Naive thymus-derived CD8-positive, alpha-beta T cell (primary cell): ENCODE measurements at regions of chr11 and their contacts with region 1.

Region 1: GRCh38 chr11:85752890-85753581 is 57.9 kb downstream of the SYTL2 start:
- DNase-seq: peak; percentile 60 to 99 (median 95)
- ATAC-seq: peak; percentile 87 to 90
- H3K4me3 Mint-ChIP-seq: peak overlapping the region; percentile 69 to 93 (median 84)
- H3K27ac Mint-ChIP-seq: peak overlapping the region; percentile 89 to 99 (median 97)
- H3K4me1 Mint-ChIP-seq: peaks cover 57 to 92% (median 88%) of the 10 kb centered on the region in 4 donors
- H3K27me3 Mint-ChIP-seq: peaks cover 0 to 2% (median 0%) of the 10 kb centered on the region in 5 donors

Region 2: GRCh38 chr11:85779956-85780640 is 27.1 kb after region 1 on chr11:
- POLR2A ChIA-PET with region 1: no interaction called
- DNase-seq: no peak
- ATAC-seq: no peak
- H3K4me3 Mint-ChIP-seq: no peak overlapping the region
- H3K27ac Mint-ChIP-seq: peak overlapping the region in 4 of 10 donors; percentile 10 to 50 (median 34)
- H3K4me1 Mint-ChIP-seq: peaks cover 25 to 44% (median 29%) of the 10 kb centered on the region in 4 donors
- H3K27me3 Mint-ChIP-seq: no peaks in the 10 kb centered on the region

Region 3: DNA sequence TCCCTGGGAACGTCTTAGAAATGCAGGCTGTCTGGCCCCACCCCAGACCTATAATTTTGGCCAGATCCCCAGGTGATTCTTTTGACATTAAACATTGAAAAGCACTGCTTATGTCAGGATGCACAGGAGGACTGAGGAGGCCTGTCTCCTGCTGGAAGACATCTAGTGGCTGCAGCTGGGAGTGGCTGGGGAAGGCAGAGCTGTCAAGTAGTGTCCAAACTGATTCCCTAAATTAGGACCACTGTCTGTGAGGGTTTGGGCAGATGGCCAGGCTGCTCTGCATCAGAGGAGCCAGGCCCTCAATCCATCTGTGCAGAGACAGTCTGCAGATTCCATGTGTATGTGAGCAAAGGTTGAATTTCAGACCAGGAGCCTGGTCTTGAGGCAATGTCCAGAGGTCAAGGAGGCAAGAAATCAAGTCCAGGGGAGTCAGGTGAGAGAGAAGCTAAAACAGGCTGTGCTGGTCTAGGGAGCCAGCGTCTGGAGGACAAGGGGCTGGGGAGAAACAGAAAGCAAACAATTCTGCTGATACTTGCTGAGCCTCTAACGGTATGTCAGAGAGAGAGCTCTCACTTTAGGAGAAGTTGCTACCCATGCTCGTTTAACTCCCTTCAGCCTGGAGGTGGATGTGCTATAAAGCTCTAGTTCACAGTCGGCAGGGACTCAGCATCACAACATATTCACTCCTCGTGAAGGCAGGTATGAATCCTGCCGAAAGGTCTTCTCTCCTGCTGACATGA is 73.2 kb after region 1 on chr11:
- POLR2A ChIA-PET with region 1: interaction called, 13 read pairs
- DNase-seq: peak in 3 of 10 donors; percentile 29 to 37 (median 30)
- ATAC-seq: no peak
- H3K4me3 Mint-ChIP-seq: peak overlapping the region in 7 of 10 donors; percentile 2 to 58 (median 31)
- H3K27ac Mint-ChIP-seq: peak overlapping the region; percentile 29 to 95 (median 88)
- H3K4me1 Mint-ChIP-seq: peaks cover 28 to 69% (median 64%) of the 10 kb centered on the region in 4 donors
- H3K27me3 Mint-ChIP-seq: no peaks in the 10 kb centered on the region